ENCODE measurements at regions of chr15 and their contacts with region 1.

Region 1: DNA sequence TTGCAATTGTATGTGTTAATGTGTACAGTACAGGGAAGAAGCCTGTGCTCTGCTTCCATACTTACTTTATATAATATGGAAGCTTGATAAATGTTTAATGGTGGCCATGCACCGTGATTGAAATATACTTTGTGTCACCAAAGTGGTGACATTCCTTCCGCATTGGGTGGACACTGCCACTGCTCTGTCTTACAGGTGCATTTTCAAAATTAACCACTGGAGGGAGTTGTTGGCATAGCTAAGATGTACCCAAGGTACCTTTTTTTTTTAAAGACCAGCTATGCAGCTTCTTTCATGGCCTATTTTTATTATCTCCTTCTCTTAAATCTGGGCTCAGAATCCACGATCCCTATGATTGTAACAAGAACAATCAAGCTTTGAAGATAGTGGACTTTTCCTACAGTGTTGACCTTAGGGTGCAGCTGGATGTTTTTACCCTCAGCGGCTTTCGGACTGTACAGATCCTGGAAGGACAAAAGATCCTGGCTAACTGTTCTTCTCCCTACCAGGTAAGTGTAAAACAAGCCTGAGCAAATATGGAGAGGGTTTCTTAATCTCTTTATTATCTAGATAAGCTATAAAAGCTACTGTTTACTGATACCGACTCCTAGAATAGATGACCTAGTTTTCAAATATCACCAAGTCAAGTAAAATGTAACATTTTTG is 21.6 kb upstream of the PAK6 start:
- DNase-seq: peak; percentile 54
- ATAC-seq: peak; percentile 91
- H3K4me3 Mint-ChIP-seq: no peak overlapping the region
- H3K27ac Mint-ChIP-seq: no peak overlapping the region
- H3K4me1 Mint-ChIP-seq: no peaks in the 10 kb centered on the region
- H3K27me3 Mint-ChIP-seq: no peaks in the 10 kb centered on the region

Region 2: GRCh38 chr15:40038638-40039543 is 178.4 kb before region 1 on chr15 and contains the start of gene SRP14:
- CTCF ChIA-PET with region 1: interaction called, 10 read pairs
- DNase-seq: peak; percentile 96
- ATAC-seq: peak; percentile 96
- H3K4me3 Mint-ChIP-seq: peak within 1 kb of the TSS; percentile 85
- H3K27ac Mint-ChIP-seq: peak within 1 kb of the TSS; percentile 94
- H3K4me1 Mint-ChIP-seq: peaks cover 50% of the 10 kb centered on the region
- H3K27me3 Mint-ChIP-seq: no peaks in the 10 kb centered on the region
- total RNA-seq, gene SRP14: 150 to 160 TPM

Region 3: GRCh38 chr15:40160689-40161688 is 56.3 kb before region 1 on chr15 and contains the start of gene BUB1B:
- CTCF ChIA-PET with region 1: interaction called, 11 read pairs
- DNase-seq: peak; percentile 97
- ATAC-seq: peak; percentile 93
- H3K4me3 Mint-ChIP-seq: no peak within 1 kb of the TSS
- H3K27ac Mint-ChIP-seq: no peak within 1 kb of the TSS
- H3K4me1 Mint-ChIP-seq: peaks cover 15% of the 10 kb centered on the region
- H3K27me3 Mint-ChIP-seq: no peaks in the 10 kb centered on the region
- total RNA-seq, gene BUB1B: 89.5 to 107 TPM

Region 4: DNA sequence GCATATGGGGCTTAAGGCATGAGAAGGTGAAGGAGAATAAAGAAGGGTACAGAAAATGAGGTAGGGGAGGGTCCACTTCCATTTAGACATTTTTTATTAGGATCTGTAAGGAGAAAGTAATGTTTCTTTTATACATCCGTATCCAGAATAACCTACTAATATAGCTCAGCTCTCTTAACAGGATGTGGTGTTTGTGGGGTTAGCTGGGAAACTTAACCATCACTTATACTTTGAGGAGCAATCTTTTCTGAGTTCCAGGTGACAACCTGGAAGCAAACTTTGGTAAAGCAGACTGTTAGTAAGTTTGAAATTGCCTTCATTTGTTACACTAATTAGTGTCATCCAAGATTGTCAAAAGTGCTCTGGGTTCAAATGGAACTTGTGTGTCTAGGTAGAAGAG is 19.9 kb before region 1 on chr15:
- CTCF ChIA-PET with region 1: interaction called, 26 read pairs
- DNase-seq: no peak
- ATAC-seq: peak; percentile 58
- H3K4me3 Mint-ChIP-seq: no peak overlapping the region
- H3K27ac Mint-ChIP-seq: peak overlapping the region; percentile 48
- H3K4me1 Mint-ChIP-seq: peaks cover 35% of the 10 kb centered on the region
- H3K27me3 Mint-ChIP-seq: no peaks in the 10 kb centered on the region

Region 5: DNA sequence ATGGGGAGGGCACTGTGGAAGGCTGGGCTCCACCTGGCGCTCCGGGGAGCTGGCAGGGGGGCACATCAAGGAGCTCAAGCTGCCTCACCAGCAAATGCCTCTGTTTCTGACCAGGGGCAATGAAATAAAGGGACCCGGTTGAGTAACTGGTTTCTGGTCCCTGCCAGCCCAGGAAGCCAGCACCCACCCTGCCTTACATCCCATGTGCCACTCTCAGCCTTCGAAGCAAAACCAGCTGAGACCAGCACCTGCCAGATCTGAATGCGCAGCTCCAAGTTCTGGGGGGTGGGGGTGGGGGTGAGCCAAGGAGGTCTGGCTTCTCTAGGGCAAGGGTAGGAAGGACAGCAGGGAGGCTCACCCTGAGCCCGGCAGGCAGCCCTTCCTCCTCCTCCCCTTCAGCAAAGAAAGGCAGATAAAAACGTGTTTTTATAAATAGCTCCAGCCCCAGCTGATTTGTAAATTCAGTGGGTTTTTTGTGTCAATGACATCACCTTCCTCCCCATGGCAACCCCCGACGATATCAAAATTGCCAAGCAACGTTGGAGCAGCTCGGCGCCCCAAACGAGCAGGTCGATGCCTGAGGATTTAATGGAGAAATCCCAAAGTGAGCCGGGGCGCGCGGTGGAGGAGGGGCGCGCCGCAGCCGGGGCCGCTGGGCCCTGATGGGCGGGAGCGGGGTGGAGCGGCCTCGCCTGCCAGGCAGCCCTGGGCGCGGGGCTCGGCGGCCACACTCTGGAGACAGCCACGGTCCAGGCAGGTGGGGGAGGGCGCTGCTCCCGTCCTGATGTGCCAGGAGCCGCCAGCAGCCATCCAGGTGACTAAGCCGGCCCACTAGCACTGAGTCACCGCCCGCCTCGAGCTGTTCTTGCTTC is 21.5 kb after region 1 on chr15 and contains the start of gene PAK6:
- CTCF ChIA-PET with region 1: interaction called, 25 read pairs
- DNase-seq: no peak
- ATAC-seq: peak; percentile 65
- H3K4me3 Mint-ChIP-seq: no peak within 1 kb of the TSS
- H3K27ac Mint-ChIP-seq: no peak within 1 kb of the TSS
- H3K4me1 Mint-ChIP-seq: peaks cover 18% of the 10 kb centered on the region
- H3K27me3 Mint-ChIP-seq: peaks cover 28% of the 10 kb centered on the region
- total RNA-seq, gene PAK6: 1.0 to 1.7 TPM

Region 6: GRCh38 chr15:40569139-40569953 is 352.1 kb after region 1 on chr15 and contains the start of gene RPUSD2:
- CTCF ChIA-PET with region 1: no interaction called
- DNase-seq: peak; percentile 97
- ATAC-seq: peak; percentile 70
- H3K4me3 Mint-ChIP-seq: peak within 1 kb of the TSS; percentile 99
- H3K27ac Mint-ChIP-seq: peak within 1 kb of the TSS; percentile 99
- H3K4me1 Mint-ChIP-seq: peaks cover 46% of the 10 kb centered on the region
- H3K27me3 Mint-ChIP-seq: no peaks in the 10 kb centered on the region
- total RNA-seq, gene RPUSD2: 17.6 to 17.7 TPM

Measured in activated CD8-positive, alpha-beta memory T cell treated with anti-CD3 and anti-CD28 coated beads, Interleukin-2, amount 10 ng/mL, durations not matched to agents 7 days and 5 days (primary cell).